Dorsolateral prefrontal cortex (tissue), 120 donors: ENCODE measurements at regions of chr19 and their contacts with region 1.

Region 1: DNA sequence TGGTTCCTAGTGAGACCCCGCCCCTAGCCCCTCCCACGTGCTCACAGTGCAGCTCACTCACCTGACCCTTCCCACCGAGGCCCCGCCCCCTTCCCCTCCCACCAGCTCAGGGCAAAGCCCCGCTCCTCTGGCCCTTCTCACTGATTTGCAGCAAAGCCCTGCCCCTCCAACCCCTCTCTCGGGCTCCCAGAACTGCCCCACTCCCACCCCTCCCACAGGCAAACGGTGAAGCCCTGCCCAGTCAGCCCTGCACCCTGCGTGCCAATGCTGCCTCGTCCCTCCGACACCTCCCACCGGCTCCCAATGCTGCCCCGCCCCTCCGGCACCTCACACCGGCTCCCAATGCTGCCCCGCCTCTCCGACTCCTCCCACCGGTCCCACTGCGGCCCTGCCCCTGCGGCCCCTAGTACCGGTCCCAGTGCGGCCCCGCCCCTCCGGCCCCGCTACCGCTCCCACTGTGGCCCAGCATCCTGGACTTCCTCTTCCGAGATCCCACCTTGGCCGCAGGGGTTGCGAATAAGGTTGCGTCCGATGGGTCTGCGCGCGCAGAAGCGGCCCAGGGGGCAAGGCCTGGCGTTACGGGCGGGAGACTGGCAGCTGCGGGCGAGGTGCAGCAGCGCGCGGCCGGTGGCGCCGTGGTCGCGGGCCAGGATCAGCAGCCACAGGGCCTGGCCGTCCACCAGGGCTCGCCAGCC is 834 bp downstream of the FBXO27 start:
- DNase-seq: peak; percentile 49 to 94 (median 87)
- H3K4me3 ChIP-seq: peak overlapping the region; percentile 64 to 95 (median 86)
- H3K27ac ChIP-seq: peak overlapping the region in 58 of 59 donors; percentile 45 to 95 (median 88)
- H3K27me3 ChIP-seq: no peaks in the 10 kb centered on the region
- CTCF ChIP-seq: peak in 2 of 56 donors; percentile 9 to 14

Region 2: GRCh38 chr19:38975214-38975860 is 56.2 kb before region 1 on chr19 and contains the start of gene FBXO17:
- intact Hi-C with region 1: loop called (anchors 5 to 10 kb)
- DNase-seq: peak in 9 of 10 donors; percentile 29 to 85 (median 69)
- H3K4me3 ChIP-seq: peak within 1 kb of the TSS; percentile 40 to 97 (median 69)
- H3K27ac ChIP-seq: peak within 1 kb of the TSS in 58 of 59 donors; percentile 3 to 96 (median 86)
- H3K27me3 ChIP-seq: no peaks in the 10 kb centered on the region
- CTCF ChIP-seq: peak in 1 of 56 donors; percentile 6
- total RNA-seq, gene FBXO17: 10.0 to 30.0 (median 17.7) TPM

Region 3: GRCh38 chr19:39064405-39064804 is 32.9 kb after region 1 on chr19:
- intact Hi-C with region 1: no loop called
- DNase-seq: no peak
- H3K4me3 ChIP-seq: no peak overlapping the region
- H3K27ac ChIP-seq: peak overlapping the region in 51 of 59 donors; percentile 0 to 86 (median 63)
- H3K27me3 ChIP-seq: no peaks in the 10 kb centered on the region
- CTCF ChIP-seq: no peak

Region 4: DNA sequence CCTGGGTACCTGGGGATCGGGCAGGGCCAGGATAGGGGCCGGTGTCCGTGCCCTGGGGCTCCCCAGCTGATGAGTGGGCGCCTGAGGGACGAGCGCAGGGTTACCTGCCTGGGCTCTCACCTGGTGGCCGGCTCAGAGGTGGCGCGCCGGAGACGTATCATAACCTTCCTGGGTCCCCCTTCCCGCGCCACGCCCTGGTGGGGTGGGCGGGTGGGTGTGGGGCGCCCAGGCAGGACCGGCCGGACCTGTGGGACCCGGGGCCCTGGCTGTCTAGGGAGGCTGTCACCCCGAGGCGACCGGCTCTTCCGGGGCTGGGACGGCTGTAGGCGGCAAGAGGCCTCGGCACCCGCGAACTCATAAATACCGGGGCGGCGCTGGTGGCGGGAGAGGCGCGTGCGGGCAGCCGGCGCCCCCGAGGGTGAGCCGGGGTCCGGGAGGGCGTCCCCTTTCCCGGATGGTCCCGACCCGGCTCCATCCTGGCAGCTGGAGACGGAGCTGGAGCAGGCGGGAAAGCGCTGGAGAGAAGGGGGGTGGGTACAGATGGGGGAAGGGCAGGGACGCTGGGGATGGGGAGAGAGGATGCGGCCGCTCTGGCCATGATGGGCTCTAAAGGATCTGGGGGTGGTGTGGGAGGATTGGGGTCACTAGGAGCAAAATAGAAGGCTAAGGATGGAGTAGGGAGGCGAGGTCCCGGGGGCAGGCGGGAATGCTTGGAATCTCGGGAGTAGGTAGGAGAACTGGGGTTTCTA is 52.6 kb after region 1 on chr19 and contains the start of gene ACP7:
- intact Hi-C with region 1: no loop called
- DNase-seq: peak in 2 of 10 donors; percentile 10 to 49
- H3K4me3 ChIP-seq: peak within 1 kb of the TSS; percentile 21 to 83 (median 59)
- H3K27ac ChIP-seq: peak within 1 kb of the TSS; percentile 54 to 99 (median 92)
- H3K27me3 ChIP-seq: peaks cover 0 to 55% (median 22%) of the 10 kb centered on the region in 45 donors
- CTCF ChIP-seq: no peak
- total RNA-seq, gene ACP7: 0.15 to 17.0 (median 2.5) TPM